PC-3 (cell line): ENCODE measurements at regions of chr3 and their contacts with region 1.

Region 1: DNA sequence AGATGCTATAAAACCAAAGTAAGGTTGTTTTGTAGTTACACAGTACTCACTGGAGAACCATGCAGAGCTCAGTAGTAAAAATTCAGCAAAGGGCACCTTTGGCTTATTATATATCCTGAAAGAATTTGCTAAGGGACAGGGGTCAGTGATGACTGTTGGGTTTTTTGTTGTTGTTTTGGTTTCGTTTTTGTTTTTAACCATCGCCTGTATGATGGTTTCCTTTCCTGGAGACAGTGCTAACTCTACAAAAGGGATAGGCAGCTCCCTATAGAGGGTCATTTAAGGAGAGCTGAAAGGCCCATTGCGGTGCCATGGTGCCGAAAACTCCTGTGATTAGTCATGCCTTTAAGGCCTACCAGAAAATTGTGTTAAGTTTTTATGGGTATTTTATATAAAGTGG is 118.2 kb upstream of the GOLIM4 start:
- DNase-seq: no peak
- ATAC-seq: no peak
- H3K4me3 ChIP-seq: no peak overlapping the region
- H3K27ac ChIP-seq: no peak overlapping the region
- H3K4me1 ChIP-seq: no peaks in the 10 kb centered on the region
- H3K27me3 ChIP-seq: no peaks in the 10 kb centered on the region
- CTCF ChIP-seq: no peak

Region 2: DNA sequence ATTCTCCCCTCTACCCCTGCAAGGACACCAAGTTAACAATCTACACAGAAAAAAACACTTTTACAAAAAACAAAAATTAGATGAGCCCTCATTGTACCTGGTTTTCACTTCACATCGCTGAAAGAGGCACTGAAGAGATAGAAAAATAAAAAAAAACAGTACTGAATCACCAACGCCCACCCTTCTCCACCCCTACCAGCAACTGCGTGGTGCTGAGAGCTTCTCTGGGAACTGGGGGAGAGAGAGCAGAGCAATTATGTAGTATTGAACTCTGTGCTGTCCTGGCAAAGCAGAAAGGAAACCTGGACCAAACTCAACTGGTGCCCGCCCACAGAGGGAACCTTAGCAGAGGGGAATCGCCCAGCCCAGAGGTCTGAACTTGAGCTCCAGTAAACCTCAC is 604.8 kb before region 1 on chr3:
- CTCF ChIA-PET with region 1: no interaction called
- POLR2A ChIA-PET with region 1: no interaction called
- intact Hi-C with region 1: no loop called
- DNase-seq: no peak
- ATAC-seq: no peak
- H3K4me3 ChIP-seq: no peak overlapping the region
- H3K27ac ChIP-seq: no peak overlapping the region
- H3K4me1 ChIP-seq: no peaks in the 10 kb centered on the region
- H3K27me3 ChIP-seq: peaks cover 25% of the 10 kb centered on the region
- CTCF ChIP-seq: no peak

Region 3: GRCh38 chr3:168620826-168621225 is 406.9 kb after region 1 on chr3:
- CTCF ChIA-PET with region 1: no interaction called
- POLR2A ChIA-PET with region 1: no interaction called
- intact Hi-C with region 1: loop called (anchors 2 kb)
- DNase-seq: peak; percentile 58
- ATAC-seq: peak; percentile 69
- H3K4me3 ChIP-seq: no peak overlapping the region
- H3K27ac ChIP-seq: no peak overlapping the region
- H3K4me1 ChIP-seq: no peaks in the 10 kb centered on the region
- H3K27me3 ChIP-seq: 0 out of 2 replicates have a peak, but pooled peaks cover under 1% of the 10 kb centered on the region
- CTCF ChIP-seq: peak; percentile 77

Region 4: DNA sequence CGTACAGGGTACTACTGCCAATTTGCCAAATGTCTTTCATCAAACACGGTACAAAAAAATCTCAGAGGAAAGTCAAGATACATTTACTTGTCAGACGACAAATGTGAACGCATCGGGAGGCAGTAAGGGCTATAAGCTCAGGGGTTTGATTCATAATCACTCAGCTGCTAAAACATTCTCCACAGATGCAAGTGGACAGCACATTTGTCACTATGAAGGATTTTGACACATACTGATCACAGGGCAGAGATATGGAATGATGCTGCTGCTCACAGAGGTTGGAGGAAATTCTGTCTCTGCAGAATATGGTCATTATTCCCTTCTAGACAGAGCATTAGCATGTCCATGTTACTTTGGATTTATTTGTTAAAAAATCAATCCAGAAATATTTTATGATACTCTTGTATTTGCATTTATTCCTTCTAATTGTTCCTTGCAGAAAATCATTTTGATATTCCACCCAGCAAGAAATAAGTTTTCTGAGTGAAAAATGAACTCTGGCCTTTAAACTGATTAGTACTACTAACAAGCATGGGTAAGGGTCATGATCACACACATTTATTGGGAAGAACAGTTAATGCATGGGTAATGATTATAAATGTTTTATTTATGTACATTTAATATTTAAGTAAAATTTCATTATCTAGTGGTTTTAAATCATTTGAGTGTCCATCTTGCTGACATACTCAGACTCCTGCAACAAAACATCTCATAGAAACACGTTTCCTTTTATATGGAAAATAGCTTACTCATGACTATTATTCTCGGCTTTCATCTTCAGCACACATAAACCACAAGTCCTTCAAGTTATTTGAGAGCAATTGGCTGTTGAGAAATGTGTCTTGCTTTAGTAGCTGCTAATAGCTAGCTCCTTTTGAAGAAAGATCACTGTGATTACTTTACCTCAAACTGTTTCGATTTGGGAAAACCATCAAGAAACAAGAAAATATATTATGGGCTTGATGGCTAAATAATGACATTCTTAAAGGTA is 890.3 kb after region 1 on chr3:
- CTCF ChIA-PET with region 1: interaction called, 10 read pairs
- POLR2A ChIA-PET with region 1: no interaction called
- intact Hi-C with region 1: no loop called
- DNase-seq: peak; percentile 67
- ATAC-seq: peak; percentile 34
- H3K4me3 ChIP-seq: no peak overlapping the region
- H3K27ac ChIP-seq: no peak overlapping the region
- H3K4me1 ChIP-seq: peaks cover 35% of the 10 kb centered on the region
- H3K27me3 ChIP-seq: no peaks in the 10 kb centered on the region
- CTCF ChIP-seq: no peak